Thyroid gland (tissue), 4 donors: ENCODE measurements at regions of chr9 and their contacts with region 1.

Region 1: DNA sequence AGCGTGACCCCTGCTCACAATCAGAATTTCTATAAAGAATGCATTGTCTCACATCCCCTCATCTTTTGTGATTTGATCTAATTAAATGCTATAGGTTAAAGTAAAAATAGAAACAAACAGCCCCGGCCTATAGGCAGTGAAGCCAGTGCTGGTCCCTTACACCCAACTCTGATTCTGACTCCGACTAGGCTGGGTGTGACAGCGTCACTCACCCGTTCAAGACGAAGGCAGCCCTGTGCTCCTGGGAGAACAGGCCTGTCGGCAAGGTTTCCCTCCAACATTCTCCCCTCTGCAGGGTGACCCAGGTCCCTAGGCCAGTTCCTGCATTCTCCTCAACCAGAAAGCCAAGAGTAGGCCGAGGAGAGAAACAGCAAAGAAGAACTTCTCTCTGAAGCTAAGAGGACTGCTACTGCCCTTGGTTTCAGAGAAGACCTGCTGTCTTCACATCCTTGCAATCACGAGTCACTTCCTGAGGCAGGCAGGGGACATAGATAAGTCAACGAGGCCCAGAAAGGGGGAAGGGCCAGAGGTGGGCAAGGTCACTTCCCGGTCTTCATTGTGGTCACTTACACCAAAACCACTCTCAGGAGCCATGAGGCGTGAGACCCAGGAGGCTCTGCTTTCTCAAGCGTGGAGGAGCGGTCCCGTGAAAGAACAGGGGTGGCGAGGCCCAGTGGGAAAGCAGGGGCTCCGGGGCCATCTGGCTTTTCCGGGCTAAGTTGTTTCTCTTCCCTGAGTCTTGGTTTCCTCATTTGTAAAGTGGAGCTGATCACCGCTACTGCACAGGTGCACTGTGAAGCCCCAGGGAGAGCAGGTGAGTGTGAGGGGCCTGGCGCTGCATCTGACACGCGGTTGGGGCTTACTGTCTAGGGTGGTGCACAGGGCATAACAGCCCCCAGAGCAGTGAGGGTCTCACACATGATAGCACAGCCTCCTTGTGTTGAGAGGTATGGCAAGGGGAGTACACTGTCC is 200.8 kb downstream of the CRB2 start:
- DNase-seq: peak; percentile 51 to 63
- H3K4me3 ChIP-seq: no peak overlapping the region
- H3K27ac ChIP-seq: no peak overlapping the region
- H3K4me1 ChIP-seq: peaks cover 11 to 24% of the 10 kb centered on the region in 2 donors
- H3K27me3 ChIP-seq: no peaks in the 10 kb centered on the region
- CTCF ChIP-seq: no peak
- POLR2A ChIP-seq: no peak

Region 2: GRCh38 chr9:123867034-123867433 is 310.3 kb after region 1 on chr9:
- intact Hi-C with region 1: loop called (anchors 5 kb)
- DNase-seq: no peak
- H3K4me3 ChIP-seq: no peak overlapping the region
- H3K27ac ChIP-seq: no peak overlapping the region
- H3K4me1 ChIP-seq: no peaks in the 10 kb centered on the region
- H3K27me3 ChIP-seq: no peaks in the 10 kb centered on the region
- CTCF ChIP-seq: no peak
- POLR2A ChIP-seq: no peak